ENCODE measurements at regions of chrX and their contacts with region 1.

Region 1: DNA sequence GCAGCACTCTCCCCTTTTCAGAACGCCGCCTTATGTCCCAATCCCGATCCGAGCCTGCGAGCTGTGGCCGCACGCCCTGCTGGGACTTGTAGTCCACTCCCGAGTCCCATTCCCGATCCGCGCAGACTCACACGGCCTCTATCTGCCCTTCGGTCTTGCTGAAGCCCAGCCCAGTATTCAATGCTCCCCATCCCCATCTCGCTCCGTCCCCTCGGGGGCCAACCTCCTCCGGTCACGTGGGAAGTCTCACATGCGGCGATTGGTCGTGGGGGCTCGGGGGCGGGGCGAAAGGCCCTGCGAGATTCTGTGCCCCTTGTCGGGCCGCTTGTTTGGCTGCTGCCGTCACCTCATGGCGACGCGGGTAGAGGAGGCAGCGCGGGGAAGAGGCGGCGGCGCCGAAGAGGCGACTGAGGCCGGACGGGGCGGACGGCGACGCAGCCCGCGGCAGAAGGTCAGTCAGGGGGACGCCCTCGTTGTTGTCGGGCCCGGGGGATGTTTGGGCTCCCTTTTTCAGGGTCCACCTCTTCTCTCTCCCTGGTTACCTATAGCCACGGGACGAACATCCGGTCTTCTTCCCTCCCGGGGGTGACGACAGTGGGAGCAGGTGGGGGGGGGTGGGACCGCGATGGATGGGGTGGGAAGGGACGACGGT is at the start of gene TXLNG:
- DNase-seq: peak; percentile 97
- ATAC-seq: peak; percentile 97
- H3K4me3 ChIP-seq: peak within 1 kb of the TSS; percentile 86
- H3K27ac ChIP-seq: peak within 1 kb of the TSS; percentile 49; the same call in 1 of the 2 replicates
- H3K4me1 ChIP-seq: peaks cover 8% of the 10 kb centered on the region
- H3K27me3 ChIP-seq: no peaks in the 10 kb centered on the region
- CTCF ChIP-seq: no peak
- total RNA-seq, gene TXLNG: 17.1 and 18.9 TPM in 2 replicates

Region 2: DNA sequence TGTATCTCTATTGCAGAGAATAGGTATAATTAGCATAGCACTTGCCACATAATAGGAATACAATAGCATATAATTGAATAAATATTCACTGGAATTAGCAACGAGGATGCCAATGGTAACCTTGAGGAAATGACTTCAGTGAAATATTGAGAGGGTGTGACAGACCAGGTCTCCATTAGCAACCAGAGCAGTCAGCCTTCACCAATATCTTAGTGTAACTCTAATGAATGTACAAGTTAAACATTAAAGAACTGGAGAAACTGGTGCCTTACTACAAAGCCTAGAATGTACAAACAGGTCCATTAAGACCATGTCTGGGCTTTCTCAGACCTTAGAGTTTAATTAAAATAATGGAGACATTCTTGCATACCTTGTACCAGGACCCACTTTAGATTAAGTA is 475.9 kb before region 1 on chrX:
- CTCF ChIA-PET with region 1: no interaction called
- POLR2A ChIA-PET with region 1: no interaction called
- intact Hi-C with region 1: no loop called
- DNase-seq: no peak
- ATAC-seq: no peak
- H3K4me3 ChIP-seq: no peak overlapping the region
- H3K27ac ChIP-seq: no peak overlapping the region
- H3K4me1 ChIP-seq: peaks cover 5% of the 10 kb centered on the region; the same call in 1 of the 2 replicates
- H3K27me3 ChIP-seq: no peaks in the 10 kb centered on the region
- CTCF ChIP-seq: no peak

Region 3: GRCh38 chrX:16712112-16712833 is 74.0 kb before region 1 on chrX and contains the start of gene CTPS2:
- CTCF ChIA-PET with region 1: no interaction called
- POLR2A ChIA-PET with region 1: interaction called, 14 read pairs
- intact Hi-C with region 1: no loop called
- DNase-seq: peak; percentile 63
- ATAC-seq: peak; percentile 92
- H3K4me3 ChIP-seq: peak within 1 kb of the TSS; percentile 98
- H3K27ac ChIP-seq: peak within 1 kb of the TSS; percentile 43
- H3K4me1 ChIP-seq: peaks cover 6% of the 10 kb centered on the region; the same call in 1 of the 2 replicates
- H3K27me3 ChIP-seq: no peaks in the 10 kb centered on the region
- CTCF ChIP-seq: no peak; the same call in 1 of the 2 replicates
- total RNA-seq, gene CTPS2: 16.1 and 25.0 TPM in 2 replicates

Region 4: DNA sequence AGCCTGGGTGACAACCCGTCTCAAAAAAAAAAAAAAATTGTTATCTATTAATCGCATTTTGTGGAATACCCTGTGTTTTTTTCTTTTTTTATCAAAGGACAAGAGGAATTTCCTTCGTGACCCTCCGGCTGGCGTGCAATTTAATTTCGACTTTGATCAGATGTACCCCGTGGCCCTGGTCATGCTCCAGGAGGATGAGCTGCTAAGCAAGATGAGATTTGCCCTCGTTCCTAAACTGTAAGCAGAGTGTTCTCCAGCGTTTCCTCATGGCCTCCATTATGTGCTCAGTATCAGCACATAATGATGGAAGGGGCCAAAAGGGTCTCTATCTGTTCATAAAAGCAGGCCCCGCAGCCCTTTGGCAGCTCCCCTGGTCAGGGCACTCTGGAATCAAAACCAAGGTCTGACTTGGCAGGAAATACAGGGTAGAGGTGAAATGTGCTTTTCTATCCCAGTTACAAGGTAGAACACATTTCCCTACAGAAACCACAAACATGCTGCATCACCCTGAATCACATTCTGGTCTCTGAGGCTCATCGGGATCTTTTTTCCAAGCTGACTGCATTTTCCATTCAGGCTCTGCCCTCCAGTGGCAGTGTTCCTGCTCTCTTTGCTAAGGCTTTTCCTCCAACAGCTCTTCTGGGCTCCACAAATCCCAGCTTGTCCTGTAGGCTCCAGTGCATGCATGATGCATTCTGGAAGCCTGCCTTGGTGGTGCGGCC is 42.5 kb before region 1 on chrX:
- CTCF ChIA-PET with region 1: no interaction called
- POLR2A ChIA-PET with region 1: no interaction called
- intact Hi-C with region 1: no loop called
- DNase-seq: peak; percentile 75
- ATAC-seq: peak; percentile 88
- H3K4me3 ChIP-seq: no peak overlapping the region
- H3K27ac ChIP-seq: peak overlapping the region; percentile 65
- H3K4me1 ChIP-seq: peaks cover 8% of the 10 kb centered on the region
- H3K27me3 ChIP-seq: no peaks in the 10 kb centered on the region
- CTCF ChIP-seq: peak; percentile 51

Region 5: GRCh38 chrX:16836371-16836770 is 50.1 kb after region 1 on chrX:
- CTCF ChIA-PET with region 1: no interaction called
- POLR2A ChIA-PET with region 1: no interaction called
- intact Hi-C with region 1: no loop called
- DNase-seq: peak; percentile 9
- ATAC-seq: peak; percentile 49; the same call in 1 of the 2 replicates
- H3K4me3 ChIP-seq: no peak overlapping the region
- H3K27ac ChIP-seq: no peak overlapping the region
- H3K4me1 ChIP-seq: 0 out of 2 replicates have a peak, but pooled peaks cover 3% of the 10 kb centered on the region
- H3K27me3 ChIP-seq: no peaks in the 10 kb centered on the region
- CTCF ChIP-seq: peak; percentile 51